ENCODE measurements at regions of chr3 and their contacts with region 1.

Region 1: DNA sequence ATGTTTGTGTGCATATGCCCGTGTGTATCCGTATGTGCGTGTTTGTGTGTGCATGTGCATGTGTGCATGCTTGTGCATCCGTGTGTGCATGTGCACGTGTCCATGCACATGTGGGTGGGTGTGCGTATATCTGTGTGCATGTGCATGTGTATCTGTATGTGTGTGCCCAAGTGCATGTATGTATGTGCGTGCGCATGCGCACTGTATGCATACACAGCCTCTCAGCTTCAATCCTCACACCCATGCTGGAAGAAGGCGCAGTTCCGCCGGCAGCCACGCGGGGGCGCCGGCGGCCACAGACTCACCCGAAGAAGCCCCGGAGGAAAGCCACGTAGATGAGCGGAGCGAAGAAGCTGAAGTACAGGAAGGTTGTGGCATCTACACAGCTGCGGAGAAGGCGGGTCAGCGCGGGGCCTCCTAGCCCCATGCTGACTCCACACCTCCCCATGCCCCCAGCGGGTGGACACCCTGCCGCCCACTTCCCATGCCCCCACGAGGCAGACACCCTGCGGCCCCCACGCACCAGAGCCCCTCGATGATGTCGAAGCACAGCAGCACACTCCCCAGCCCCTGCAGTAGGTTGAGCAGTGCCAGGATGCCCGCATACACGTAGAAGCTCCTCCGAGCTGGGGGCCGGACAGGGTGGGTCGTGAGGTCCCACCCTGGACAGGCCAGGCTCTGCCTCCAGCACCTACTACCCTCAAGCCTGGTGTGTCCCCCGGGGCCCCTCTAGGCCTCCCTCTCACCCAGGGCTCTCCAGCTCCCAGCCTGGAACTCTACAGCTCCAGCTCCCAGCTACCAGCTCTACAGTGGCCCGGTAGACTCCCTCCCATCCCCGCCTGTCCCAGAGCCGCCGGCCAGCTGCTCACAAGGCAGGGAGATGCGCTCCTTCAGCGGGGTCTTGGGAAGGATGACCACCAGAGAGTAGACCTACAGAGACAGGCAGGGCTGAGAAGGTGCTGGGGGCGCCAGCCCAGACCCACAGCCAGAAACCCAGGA is 15.4 kb downstream of the TPRA1 start:
- DNase-seq: peak; percentile 95
- H3K4me3 ChIP-seq: no peak overlapping the region
- H3K27ac ChIP-seq: no peak overlapping the region
- H3K4me1 ChIP-seq: peaks cover 6% of the 10 kb centered on the region
- H3K27me3 ChIP-seq: no peaks in the 10 kb centered on the region
- CTCF ChIP-seq: peak; percentile 95 to 99 (median 98)
- POLR2A ChIP-seq: no peak

Region 2: DNA sequence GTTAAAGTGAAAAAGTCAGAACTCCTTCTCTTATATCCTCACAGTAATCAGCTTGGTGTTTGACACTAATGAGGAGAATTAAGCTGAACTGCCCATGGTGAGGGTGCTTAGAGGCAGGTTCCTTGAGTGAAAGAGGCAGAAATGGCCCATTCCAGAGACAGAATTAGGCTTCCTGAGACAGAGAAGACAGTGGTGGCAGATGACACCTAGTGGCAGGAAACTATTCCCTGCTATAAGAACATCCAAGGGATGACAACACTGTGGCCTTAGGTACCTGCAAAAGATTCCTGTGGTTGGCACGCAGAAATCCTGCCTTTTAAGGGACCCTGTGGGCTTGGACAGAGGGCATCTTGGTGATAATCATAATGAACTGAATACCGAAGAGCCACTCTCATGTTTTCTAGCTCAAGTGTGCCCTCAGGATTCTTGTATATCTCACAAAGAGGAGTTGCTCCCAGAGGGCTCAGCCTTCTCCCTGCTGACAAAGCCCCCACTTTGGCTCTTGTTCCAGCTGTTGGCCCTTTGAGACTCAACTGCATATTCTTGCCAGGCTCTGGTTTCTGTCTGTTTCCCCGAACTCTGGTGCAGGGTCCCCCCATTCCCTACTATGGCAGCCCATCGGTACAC is 395.9 kb after region 1 on chr3:
- intact Hi-C with region 1: loop called (anchors 10 kb)
- DNase-seq: peak; percentile 65
- H3K4me3 ChIP-seq: no peak overlapping the region
- H3K27ac ChIP-seq: no peak overlapping the region
- H3K4me1 ChIP-seq: no peaks in the 10 kb centered on the region
- H3K27me3 ChIP-seq: no peaks in the 10 kb centered on the region
- CTCF ChIP-seq: peak; percentile 53 to 74 (median 73)
- POLR2A ChIP-seq: no peak

Measured in testis (tissue), 5 donors.